CD8-positive, alpha-beta memory T cell (primary cell): ENCODE measurements at regions of chr17 and their contacts with region 1.

Region 1: DNA sequence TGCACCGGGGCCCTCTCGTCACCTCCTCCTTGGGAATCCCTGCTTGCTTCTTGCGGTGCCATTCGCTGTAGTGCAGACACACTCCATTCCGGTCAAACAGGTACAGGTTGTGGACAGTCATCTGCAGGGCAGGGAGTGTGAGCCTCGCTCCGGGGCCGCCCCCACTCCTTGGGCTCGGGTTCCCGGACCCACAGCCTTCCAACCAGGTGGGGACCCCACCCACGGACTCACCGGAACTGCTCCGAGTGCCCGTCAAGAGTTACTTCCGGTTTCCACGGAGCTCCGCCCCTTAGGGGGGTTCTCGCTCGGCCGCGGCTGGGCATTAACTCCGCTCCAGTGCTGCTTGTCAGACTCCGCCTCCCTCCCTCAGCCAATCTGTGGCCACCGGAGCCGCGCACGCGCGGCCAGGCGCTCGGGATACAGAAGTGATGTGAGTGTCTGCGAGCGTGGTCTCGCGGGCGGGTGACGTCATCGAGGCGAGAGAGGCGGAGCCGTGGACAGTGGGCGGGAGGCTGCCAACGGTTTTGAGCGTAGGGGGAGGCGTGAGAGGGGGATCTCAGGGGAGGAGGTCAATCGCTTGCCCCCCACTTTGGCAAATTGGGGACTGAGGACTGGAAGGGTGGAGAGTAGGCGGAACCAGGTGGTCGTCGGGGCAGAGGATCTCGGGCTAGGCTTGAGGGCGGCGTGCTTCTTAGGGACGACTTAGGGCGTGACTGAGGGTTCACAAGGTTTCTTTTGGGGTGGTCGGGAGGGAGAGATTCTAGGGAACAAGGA is at the starts of genes CNTROB and TRAPPC1:
- DNase-seq: peak; percentile 99 to 100 (median 99)
- H3K4me3 ChIP-seq: peak within 1 kb of the TSS; percentile 97
- H3K4me3 Mint-ChIP-seq: peak within 1 kb of the TSS; percentile 88 to 99 (median 96)
- H3K27ac ChIP-seq: peak within 1 kb of the TSS; percentile 92
- H3K27ac Mint-ChIP-seq: peak within 1 kb of the TSS; percentile 74 to 99 (median 98)
- H3K4me1 ChIP-seq: peaks cover 34% of the 10 kb centered on the region
- H3K4me1 Mint-ChIP-seq: peaks cover 43 to 59% (median 54%) of the 10 kb centered on the region in 3 donors
- H3K27me3 ChIP-seq: no peaks in the 10 kb centered on the region
- H3K27me3 Mint-ChIP-seq: peaks cover 0 to 2% of the 10 kb centered on the region in 2 donors
- total RNA-seq, gene CNTROB: 44.3 to 46.8 TPM
- total RNA-seq, gene TRAPPC1: 158 TPM

Region 2: DNA sequence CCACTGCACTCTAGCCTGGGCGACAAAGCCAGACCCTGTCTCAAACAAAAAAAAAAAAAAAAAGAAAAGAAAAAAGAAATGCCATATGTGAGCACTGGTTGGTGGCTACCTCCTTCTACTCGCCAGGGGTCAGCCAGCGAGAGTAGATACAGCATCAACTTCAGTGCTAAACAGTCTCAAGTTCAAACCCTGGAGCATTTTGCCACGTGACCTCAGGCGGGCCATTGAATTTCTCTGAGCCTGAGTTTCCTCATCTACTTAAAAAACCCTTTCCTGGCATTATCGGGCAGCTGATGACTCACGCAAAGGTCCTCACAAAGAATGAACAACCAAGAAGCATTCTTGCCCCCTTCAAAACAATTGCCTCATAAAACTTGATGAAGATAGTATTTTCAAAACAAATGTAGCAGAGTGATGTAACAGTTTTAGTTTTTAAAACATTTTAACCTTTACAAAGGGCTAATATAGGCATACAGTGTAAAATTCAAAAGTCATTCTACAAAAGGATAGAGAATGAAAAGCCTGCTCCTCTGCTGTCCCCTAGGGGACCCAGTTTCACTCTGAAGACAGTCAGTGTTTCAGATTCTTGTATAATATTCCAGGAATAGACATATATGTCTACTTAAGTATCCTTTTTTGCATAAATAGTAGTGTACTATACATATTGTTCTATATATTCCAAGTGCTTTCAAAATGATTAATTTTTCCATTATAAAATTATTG is 186.0 kb before region 1 on chr17:
- CTCF ChIA-PET with region 1: interaction called, 3 read pairs
- POLR2A ChIA-PET with region 1: interaction called, 12 read pairs
- DNase-seq: no peak
- H3K4me3 ChIP-seq: no peak overlapping the region
- H3K4me3 Mint-ChIP-seq: no peak overlapping the region
- H3K27ac ChIP-seq: no peak overlapping the region
- H3K27ac Mint-ChIP-seq: no peak overlapping the region
- H3K4me1 ChIP-seq: no peaks in the 10 kb centered on the region
- H3K4me1 Mint-ChIP-seq: no peaks in the 10 kb centered on the region
- H3K27me3 ChIP-seq: no peaks in the 10 kb centered on the region
- H3K27me3 Mint-ChIP-seq: peaks cover 9 to 19% of the 10 kb centered on the region in 2 donors

Region 3: DNA sequence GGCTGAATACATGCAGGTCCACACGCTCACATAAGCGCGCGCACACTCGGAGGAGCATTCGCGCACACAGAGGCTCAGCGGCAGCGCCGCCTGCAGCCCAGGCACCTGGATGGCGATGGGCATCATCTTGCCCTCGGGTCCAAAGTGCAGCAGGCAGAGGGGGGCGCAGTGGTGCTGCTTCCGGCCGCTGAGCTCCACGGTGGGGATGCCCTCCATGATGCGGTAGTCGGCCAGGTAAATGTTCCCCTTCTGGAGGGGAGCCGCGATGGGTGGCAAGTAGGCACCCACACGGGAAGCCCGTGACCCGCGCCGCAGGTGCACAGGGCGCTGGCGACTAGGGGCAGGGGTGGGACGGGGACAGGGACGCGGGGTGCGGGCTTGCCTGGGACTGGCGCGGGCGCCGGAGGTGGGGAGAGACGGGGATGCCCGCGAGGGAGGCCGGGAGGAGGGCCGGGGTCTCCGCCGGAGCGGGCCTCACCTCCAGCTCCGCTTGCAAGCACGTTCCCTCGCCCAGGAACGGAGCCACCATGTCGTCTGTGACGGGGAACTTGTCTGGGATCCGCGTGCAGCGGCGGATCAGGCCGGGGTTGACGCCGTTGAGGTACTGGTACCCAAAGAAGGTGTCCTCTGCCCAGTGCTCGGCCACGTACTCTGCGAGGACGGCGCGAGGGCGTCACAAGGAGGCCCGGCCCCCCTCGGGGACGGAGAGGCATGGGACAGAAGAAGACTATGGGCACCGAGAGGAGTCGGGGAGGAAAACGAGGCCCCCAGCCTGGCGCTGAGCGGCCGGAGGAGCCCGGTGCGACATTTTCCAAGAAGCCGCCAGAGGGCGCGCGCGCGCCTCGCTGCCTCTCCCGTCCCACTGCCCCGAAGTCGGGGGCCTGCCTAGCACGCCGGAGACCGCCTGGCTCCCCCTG is 147.7 kb after region 1 on chr17:
- CTCF ChIA-PET with region 1: no interaction called
- POLR2A ChIA-PET with region 1: no interaction called
- DNase-seq: peak; percentile 68 to 85 (median 72)
- H3K4me3 ChIP-seq: peak overlapping the region; percentile 78
- H3K4me3 Mint-ChIP-seq: peak overlapping the region; percentile 70 to 95 (median 92)
- H3K27ac ChIP-seq: peak overlapping the region; percentile 57
- H3K27ac Mint-ChIP-seq: peak overlapping the region; percentile 24 to 92 (median 84)
- H3K4me1 ChIP-seq: peaks cover 15% of the 10 kb centered on the region
- H3K4me1 Mint-ChIP-seq: peaks cover 4 to 20% (median 16%) of the 10 kb centered on the region in 3 donors
- H3K27me3 ChIP-seq: peaks cover 8% of the 10 kb centered on the region
- H3K27me3 Mint-ChIP-seq: peaks cover 7 to 10% of the 10 kb centered on the region in 2 donors